ENCODE measurements at regions of chr12 and their contacts with region 1.

Region 1: GRCh38 chr12:103441437-103442181 is 54.2 kb downstream of the C12orf42 start:
- DNase-seq: peak; percentile 68
- ATAC-seq: peak; percentile 99
- H3K4me3 Mint-ChIP-seq: peak overlapping the region; percentile 67
- H3K27ac Mint-ChIP-seq: peak overlapping the region; percentile 97
- H3K4me1 Mint-ChIP-seq: peaks cover 29% of the 10 kb centered on the region
- H3K27me3 Mint-ChIP-seq: no peaks in the 10 kb centered on the region
- CTCF ChIP-seq: no peak

Region 2: GRCh38 chr12:103495479-103496456 is 54.2 kb after region 1 on chr12 and contains the start of gene C12orf42:
- CTCF ChIA-PET with region 1: no interaction called
- POLR2A ChIA-PET with region 1: no interaction called
- intact Hi-C with region 1: loop called (anchors 2 kb)
- DNase-seq: peak; percentile 82
- ATAC-seq: peak; percentile 72
- H3K4me3 Mint-ChIP-seq: peak within 1 kb of the TSS; percentile 64
- H3K27ac Mint-ChIP-seq: peak within 1 kb of the TSS; percentile 37
- H3K4me1 Mint-ChIP-seq: peaks cover 34% of the 10 kb centered on the region
- H3K27me3 Mint-ChIP-seq: peaks cover 13% of the 10 kb centered on the region
- CTCF ChIP-seq: peak; percentile 66
- total RNA-seq, gene C12orf42: 0.49 to 1.4 TPM

Region 3: GRCh38 chr12:104710940-104711689 is 1269.5 kb after region 1 on chr12:
- CTCF ChIA-PET with region 1: no interaction called
- POLR2A ChIA-PET with region 1: no interaction called
- intact Hi-C with region 1: no loop called
- DNase-seq: no peak
- ATAC-seq: no peak
- H3K4me3 Mint-ChIP-seq: no peak overlapping the region
- H3K27ac Mint-ChIP-seq: no peak overlapping the region
- H3K4me1 Mint-ChIP-seq: peaks cover 47% of the 10 kb centered on the region
- H3K27me3 Mint-ChIP-seq: no peaks in the 10 kb centered on the region
- CTCF ChIP-seq: no peak

Measured in activated CD8-positive, alpha-beta T cell treated with anti-CD3 and anti-CD28 coated beads for 36 hours (primary cell).